A549 (cell line): ENCODE measurements at regions of chr4 and their contacts with region 1.

Region 1: DNA sequence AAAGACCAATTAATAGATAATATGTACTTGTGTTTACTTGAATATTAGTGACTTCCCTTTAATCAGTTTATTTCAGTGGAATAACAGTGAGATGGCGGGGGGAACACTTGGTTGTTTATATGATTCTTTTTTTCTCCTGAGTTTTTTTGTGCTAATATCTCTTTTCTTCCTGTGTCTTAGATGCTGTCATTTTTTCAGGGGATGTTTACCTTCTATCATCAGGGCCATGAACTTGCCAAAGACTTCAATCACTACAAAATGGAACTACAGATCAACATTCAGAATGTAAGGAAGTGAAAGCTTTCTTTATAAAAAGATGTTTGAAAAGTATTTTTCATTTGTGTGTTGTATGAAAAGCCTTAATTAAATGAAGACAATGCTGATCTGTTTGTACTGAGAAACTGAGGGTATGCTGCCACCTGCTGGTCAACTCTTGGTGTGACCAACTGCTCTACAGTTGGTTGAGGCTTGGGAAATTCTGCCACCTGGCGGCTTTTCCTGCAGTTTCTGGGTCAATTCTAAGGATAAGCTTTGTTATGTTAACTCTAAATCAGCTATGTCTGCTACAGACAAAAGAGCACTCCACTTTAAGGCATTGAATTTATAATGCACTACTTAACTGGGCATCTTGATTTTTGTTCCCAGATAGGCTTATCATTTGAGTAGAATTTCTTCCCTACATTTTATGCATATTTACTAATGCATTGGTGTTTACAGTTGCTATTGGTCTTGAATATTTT is 134.8 kb downstream of the ARHGAP10 start:
- DNase-seq: peak; percentile 33 to 78
- ATAC-seq: peak; percentile 92 to 98
- H3K4me3 ChIP-seq: no peak overlapping the region
- H3K27ac ChIP-seq: no peak overlapping the region
- H3K4me1 ChIP-seq: no peaks in the 10 kb centered on the region
- CTCF ChIP-seq: peak; percentile 99
- EP300 ChIP-seq: no peak
- POLR2A ChIP-seq: no peak
- RAD21 ChIP-seq: peak; percentile 98

Region 2: DNA sequence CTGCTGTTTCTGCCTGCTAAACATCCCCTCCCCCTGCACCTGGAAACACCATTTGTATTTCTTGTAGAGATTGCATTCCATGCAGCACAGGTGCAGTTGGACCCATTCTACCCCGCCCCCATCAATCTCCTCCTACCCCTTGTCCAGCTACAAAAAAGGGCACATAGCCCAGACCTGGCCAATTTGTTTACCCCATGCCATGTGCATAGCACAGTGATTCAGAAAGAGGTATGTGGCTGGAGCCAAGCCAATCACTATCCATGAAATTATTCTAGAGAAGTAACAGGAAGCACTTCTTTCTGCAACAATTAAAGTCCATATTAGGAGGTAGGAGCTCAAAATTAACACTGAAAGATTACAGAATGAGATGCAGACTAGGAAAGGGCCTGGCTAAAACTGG is 269.7 kb before region 1 on chr4:
- CTCF ChIA-PET with region 1: interaction called, 19 read pairs
- POLR2A ChIA-PET with region 1: no interaction called
- DNase-seq: peak in 1 of 2 experiments; percentile 10
- ATAC-seq: peak in 1 of 2 experiments; percentile 61; a peak in 3 of 6 replicates
- H3K4me3 ChIP-seq: no peak overlapping the region
- H3K27ac ChIP-seq: no peak overlapping the region
- H3K4me1 ChIP-seq: peaks cover 8% of the 10 kb centered on the region; the same call in 1 of the 3 replicates
- CTCF ChIP-seq: no peak
- EP300 ChIP-seq: no peak
- POLR2A ChIP-seq: no peak
- RAD21 ChIP-seq: no peak

Region 3: DNA sequence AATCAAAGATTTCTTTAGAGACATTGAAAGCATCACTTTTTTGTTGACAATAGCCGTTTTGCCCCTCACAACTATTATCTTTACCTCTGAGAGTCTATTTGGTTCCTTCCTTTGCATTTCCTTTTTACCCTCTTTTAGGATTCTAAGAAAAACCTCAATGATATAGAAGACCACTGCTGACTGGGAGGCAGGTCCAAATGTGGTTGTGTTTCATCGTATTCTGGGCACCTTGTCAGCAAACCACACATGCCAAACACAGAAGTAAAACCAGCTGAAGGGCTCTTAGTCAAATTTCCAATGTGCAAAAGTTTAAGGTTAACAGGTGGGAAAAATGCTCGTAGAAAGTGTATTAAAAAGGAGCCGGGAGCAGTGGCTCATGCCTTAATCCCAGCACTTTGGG is 177.6 kb before region 1 on chr4:
- CTCF ChIA-PET with region 1: interaction called, 37 read pairs
- POLR2A ChIA-PET with region 1: interaction called, 7 read pairs
- DNase-seq: no peak
- ATAC-seq: no peak
- H3K4me3 ChIP-seq: no peak overlapping the region
- H3K27ac ChIP-seq: no peak overlapping the region
- H3K4me1 ChIP-seq: peaks cover 17% of the 10 kb centered on the region
- CTCF ChIP-seq: no peak
- EP300 ChIP-seq: no peak
- POLR2A ChIP-seq: no peak
- RAD21 ChIP-seq: no peak

Region 4: DNA sequence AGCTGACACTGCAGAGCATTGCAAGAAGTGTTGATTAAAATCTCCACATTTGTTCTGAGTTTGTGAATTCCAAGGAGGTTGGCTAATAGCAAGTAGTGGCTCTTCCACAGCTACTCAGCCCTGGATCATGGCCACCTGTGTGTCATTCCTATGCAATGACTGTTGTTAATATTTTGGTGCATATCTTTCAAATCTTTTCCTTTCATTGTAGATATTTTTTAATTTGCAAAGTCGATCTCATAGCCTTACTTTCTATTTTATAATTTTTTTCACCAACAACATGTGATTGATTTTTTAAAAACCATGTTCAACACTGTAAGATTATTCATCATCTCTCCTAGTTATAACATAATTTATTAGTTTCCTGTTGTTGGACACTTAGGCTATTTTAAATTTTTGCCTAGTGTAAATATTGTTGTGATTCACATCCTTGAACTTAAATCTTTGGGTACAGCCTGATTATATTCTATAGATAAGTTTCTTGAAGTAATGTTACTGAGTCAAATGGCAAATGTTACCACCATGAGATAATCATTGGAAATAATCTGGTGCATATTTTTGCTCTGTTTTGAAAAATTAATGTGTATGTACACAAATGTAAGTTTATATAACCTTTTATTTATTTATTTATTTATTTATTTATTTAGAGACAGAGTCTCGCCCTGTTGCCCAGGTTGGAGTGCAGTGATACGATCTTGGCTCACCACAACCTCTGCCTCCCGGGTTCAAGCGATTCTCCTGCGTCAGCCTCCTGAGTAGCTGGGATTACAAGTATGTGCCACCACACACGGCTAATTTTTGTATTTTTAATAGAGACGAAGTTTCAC is 151.9 kb before region 1 on chr4:
- CTCF ChIA-PET with region 1: interaction called, 71 read pairs
- POLR2A ChIA-PET with region 1: no interaction called
- DNase-seq: no peak
- ATAC-seq: no peak
- H3K4me3 ChIP-seq: no peak overlapping the region
- H3K27ac ChIP-seq: no peak overlapping the region
- H3K4me1 ChIP-seq: peaks cover 4% of the 10 kb centered on the region; the same call in 1 of the 3 replicates
- CTCF ChIP-seq: no peak
- EP300 ChIP-seq: no peak
- POLR2A ChIP-seq: no peak
- RAD21 ChIP-seq: no peak

Region 5: GRCh38 chr4:147823130-147823529 is 43.6 kb before region 1 on chr4:
- CTCF ChIA-PET with region 1: interaction called, 13 read pairs
- POLR2A ChIA-PET with region 1: no interaction called
- DNase-seq: no peak
- ATAC-seq: no peak
- H3K4me3 ChIP-seq: no peak overlapping the region
- H3K27ac ChIP-seq: no peak overlapping the region
- H3K4me1 ChIP-seq: 0 out of 3 replicates have a peak, but pooled peaks cover 6% of the 10 kb centered on the region
- CTCF ChIP-seq: no peak
- EP300 ChIP-seq: no peak
- POLR2A ChIP-seq: no peak
- RAD21 ChIP-seq: no peak

Region 6: DNA sequence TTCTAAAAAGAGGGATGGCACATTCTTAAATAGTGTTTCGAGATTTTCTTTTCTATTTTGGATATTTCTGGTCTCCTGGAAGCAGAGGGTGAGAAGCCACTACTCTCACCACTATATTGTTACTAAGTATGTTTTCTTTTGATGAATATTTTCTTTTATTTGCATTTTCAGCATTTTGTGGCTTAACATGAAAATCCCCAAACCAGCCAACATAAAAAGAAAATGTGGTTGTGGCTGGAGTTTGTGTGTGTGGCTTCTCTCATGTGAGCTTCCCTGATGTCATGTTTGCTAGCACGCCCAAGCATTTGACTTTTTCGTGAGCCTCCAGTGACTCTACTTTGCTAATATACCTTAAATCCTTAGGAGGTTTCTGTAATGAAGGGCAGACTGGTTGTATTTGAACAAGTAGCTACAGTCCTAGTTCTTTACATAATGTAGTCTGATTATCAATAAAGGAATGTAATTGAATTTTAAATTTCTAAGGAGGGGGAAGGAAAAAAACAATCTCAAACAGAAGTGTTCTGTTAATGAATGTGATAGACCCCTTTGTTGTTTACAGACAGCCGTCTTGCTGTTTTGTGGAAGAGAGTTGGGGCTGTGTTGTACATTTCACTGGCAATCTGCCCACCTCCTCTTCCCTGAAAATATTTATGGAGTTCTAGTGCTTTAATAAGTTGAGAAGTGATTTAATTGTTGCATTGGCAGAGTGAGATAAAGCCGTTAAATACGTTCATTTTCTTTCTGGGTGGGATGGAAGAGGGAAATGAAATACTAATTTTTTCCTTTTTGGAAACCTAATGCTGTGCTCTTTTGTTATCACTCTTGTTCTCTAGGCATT is 20.2 kb before region 1 on chr4:
- CTCF ChIA-PET with region 1: interaction called, 23 read pairs
- POLR2A ChIA-PET with region 1: no interaction called
- DNase-seq: no peak
- ATAC-seq: no peak
- H3K4me3 ChIP-seq: no peak overlapping the region
- H3K27ac ChIP-seq: no peak overlapping the region
- H3K4me1 ChIP-seq: no peaks in the 10 kb centered on the region
- CTCF ChIP-seq: no peak
- EP300 ChIP-seq: no peak
- POLR2A ChIP-seq: no peak
- RAD21 ChIP-seq: no peak

Region 7: GRCh38 chr4:147891476-147892115 is 24.9 kb after region 1 on chr4:
- CTCF ChIA-PET with region 1: interaction called, 13 read pairs
- POLR2A ChIA-PET with region 1: no interaction called
- DNase-seq: no peak
- ATAC-seq: no peak
- H3K4me3 ChIP-seq: no peak overlapping the region
- H3K27ac ChIP-seq: no peak overlapping the region
- H3K4me1 ChIP-seq: no peaks in the 10 kb centered on the region
- CTCF ChIP-seq: no peak
- EP300 ChIP-seq: no peak
- POLR2A ChIP-seq: no peak
- RAD21 ChIP-seq: no peak

Region 8: GRCh38 chr4:147975933-147976928 is 109.5 kb after region 1 on chr4:
- CTCF ChIA-PET with region 1: no interaction called
- POLR2A ChIA-PET with region 1: no interaction called
- DNase-seq: no peak
- ATAC-seq: no peak
- H3K4me3 ChIP-seq: no peak overlapping the region
- H3K27ac ChIP-seq: no peak overlapping the region
- H3K4me1 ChIP-seq: no peaks in the 10 kb centered on the region
- CTCF ChIP-seq: no peak
- EP300 ChIP-seq: no peak
- POLR2A ChIP-seq: no peak
- RAD21 ChIP-seq: no peak